Psoas muscle (tissue), 8 donors: ENCODE measurements at regions of chr11 and their contacts with region 1.

Region 1: DNA sequence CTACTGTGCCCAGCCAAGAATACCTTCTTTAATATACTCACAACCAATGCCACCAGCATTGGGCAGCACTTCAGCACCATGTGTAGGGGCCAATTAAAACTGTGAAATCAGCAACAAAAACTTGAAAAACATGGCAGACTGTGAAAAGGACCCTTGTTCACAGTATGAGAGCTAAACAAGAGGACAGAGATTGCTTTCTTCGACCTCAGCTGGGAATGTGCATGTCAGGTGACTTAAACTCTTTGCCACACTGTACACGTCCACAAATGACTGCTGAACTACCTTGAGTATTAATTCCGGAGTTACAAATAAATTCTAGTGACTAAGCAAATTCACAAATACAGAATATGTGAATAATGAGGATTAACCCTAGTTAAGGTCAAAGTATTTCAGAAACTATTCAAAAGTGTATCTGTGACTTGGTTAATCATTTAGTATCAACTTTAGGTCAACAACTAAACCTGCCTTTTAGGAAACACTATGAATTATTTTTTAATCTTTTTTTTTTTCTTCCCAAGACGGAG is 33.0 kb downstream of the DDX6 start:
- DNase-seq: no peak
- ATAC-seq: peak in 1 of 4 donors; percentile 37
- H3K4me3 ChIP-seq: no peak overlapping the region
- H3K27ac ChIP-seq: no peak overlapping the region
- H3K4me1 ChIP-seq: no peaks in the 10 kb centered on the region
- H3K27me3 ChIP-seq: no peaks in the 10 kb centered on the region
- CTCF ChIP-seq: no peak

Region 2: DNA sequence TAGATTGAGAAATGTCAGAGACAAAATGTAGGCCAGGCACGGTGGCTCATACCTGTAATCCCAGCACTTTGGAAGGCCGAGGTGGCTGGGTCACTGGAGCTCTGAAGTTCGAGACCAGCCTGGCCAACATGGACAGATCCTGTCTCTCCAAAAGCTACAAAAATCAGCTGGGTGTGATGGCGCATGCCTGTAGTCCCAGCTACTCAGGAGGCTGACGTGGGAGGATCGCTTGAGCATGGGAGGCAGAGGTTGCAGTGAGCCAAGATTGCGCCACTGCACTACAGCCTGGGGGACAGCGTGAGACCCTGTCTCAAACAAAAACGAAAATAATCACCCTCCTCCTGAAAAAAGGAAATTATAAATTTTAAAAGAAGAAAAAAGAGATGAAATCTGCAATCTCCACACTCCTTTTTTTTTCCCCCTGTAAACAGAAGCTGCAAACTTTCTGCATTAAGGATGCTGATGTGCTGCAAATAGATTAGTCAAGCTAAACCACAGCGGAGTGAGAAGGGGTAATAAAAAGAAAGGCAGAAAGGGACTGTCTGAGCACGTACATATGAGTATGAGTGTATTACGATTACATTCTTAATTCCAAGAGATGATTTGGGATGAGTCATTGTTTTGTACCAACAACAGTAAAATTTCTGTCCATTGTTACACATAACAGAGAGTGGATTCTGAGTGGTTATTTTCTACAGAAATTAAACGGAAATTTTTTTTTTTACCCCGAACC is 1747.0 kb before region 1 on chr11:
- intact Hi-C with region 1: no loop called
- DNase-seq: no peak
- ATAC-seq: peak in 2 of 4 donors; percentile 37 to 54
- H3K4me3 ChIP-seq: no peak overlapping the region
- H3K27ac ChIP-seq: no peak overlapping the region
- H3K4me1 ChIP-seq: peaks cover 10% of the 10 kb centered on the region
- H3K27me3 ChIP-seq: no peaks in the 10 kb centered on the region
- CTCF ChIP-seq: no peak

Region 3: DNA sequence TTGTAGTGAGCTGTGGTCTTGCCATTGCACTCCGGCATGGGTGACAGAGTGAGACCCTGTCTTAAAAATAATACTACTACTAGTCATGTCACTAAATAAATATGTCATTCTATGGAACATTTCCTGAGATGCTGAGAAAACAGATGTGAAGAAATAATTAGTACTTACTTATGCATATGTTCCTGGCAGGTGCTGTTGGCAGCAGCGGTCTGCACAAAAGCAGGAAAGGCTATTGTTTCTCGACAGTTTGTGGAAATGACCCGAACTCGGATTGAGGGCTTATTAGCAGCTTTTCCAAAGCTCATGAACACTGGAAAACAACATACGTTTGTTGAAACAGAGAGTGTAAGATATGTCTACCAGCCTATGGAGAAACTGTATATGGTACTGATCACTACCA is 176.9 kb before region 1 on chr11:
- intact Hi-C with region 1: loop called in 1 of 2 experiments (anchors 10 kb)
- DNase-seq: no peak
- ATAC-seq: no peak
- H3K4me3 ChIP-seq: no peak overlapping the region
- H3K27ac ChIP-seq: peak overlapping the region; percentile 19
- H3K4me1 ChIP-seq: peaks cover 37% of the 10 kb centered on the region
- H3K27me3 ChIP-seq: no peaks in the 10 kb centered on the region
- CTCF ChIP-seq: no peak